ENCODE measurements at regions of chr22 and their contacts with region 1.

Region 1: GRCh38 chr22:27238935-27239510 is 562.5 kb downstream of the MN1 start:
- DNase-seq: peak; percentile 99
- H3K4me3 ChIP-seq: no peak overlapping the region
- H3K27ac ChIP-seq: peak overlapping the region; percentile 96
- H3K4me1 ChIP-seq: peaks cover 44% of the 10 kb centered on the region
- H3K27me3 ChIP-seq: no peaks in the 10 kb centered on the region
- CTCF ChIP-seq: no peak
- POLR2A ChIP-seq: peak; percentile 92

Region 2: GRCh38 chr22:26672590-26673468 is 566.2 kb before region 1 on chr22:
- CTCF ChIA-PET with region 1: no interaction called
- POLR2A ChIA-PET with region 1: no interaction called
- dilution Hi-C with region 1: no loop called
- intact Hi-C with region 1: loop called (anchors 5 kb)
- DNase-seq: peak; percentile 76
- H3K4me3 ChIP-seq: peak overlapping the region; percentile 52 to 76 (median 56)
- H3K27ac ChIP-seq: peak overlapping the region; percentile 93
- H3K4me1 ChIP-seq: peaks cover 21% of the 10 kb centered on the region
- H3K27me3 ChIP-seq: no peaks in the 10 kb centered on the region
- CTCF ChIP-seq: peak; percentile 23 to 29
- POLR2A ChIP-seq: peak; percentile 82

Region 3: GRCh38 chr22:26835929-26836528 is 403.0 kb before region 1 on chr22:
- CTCF ChIA-PET with region 1: no interaction called
- POLR2A ChIA-PET with region 1: no interaction called
- dilution Hi-C with region 1: no loop called
- intact Hi-C with region 1: loop called (anchors 10 kb)
- DNase-seq: peak; percentile 42
- H3K4me3 ChIP-seq: no peak overlapping the region
- H3K27ac ChIP-seq: no peak overlapping the region
- H3K4me1 ChIP-seq: no peaks in the 10 kb centered on the region
- H3K27me3 ChIP-seq: no peaks in the 10 kb centered on the region
- CTCF ChIP-seq: peak; percentile 51 to 71
- POLR2A ChIP-seq: no peak

Region 4: DNA sequence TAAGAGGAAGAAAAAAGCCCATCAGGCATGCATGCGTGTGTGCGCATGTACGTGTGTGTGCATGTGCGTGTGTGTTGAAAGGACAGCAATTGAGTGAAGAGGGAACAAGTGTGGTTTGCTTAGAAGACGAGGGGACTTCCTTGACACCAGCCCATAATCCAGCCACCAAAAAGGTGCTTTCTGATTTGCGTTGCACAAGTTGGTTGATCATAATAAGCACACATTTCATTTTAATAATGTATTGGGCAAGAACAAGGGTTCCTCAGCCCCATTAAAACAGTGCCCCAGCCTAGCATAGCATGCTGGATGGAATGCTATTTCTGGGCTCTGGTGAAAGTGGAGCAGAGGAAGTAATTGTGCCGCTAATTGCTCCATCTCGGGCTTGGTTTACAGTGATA is 88.5 kb before region 1 on chr22:
- CTCF ChIA-PET with region 1: interaction called, 3 read pairs
- POLR2A ChIA-PET with region 1: no interaction called
- dilution Hi-C with region 1: no loop called
- intact Hi-C with region 1: loop called (anchors 1 kb)
- DNase-seq: no peak
- H3K4me3 ChIP-seq: no peak overlapping the region
- H3K27ac ChIP-seq: no peak overlapping the region
- H3K4me1 ChIP-seq: peaks cover 35% of the 10 kb centered on the region
- H3K27me3 ChIP-seq: no peaks in the 10 kb centered on the region
- CTCF ChIP-seq: no peak
- POLR2A ChIP-seq: no peak

Region 5: DNA sequence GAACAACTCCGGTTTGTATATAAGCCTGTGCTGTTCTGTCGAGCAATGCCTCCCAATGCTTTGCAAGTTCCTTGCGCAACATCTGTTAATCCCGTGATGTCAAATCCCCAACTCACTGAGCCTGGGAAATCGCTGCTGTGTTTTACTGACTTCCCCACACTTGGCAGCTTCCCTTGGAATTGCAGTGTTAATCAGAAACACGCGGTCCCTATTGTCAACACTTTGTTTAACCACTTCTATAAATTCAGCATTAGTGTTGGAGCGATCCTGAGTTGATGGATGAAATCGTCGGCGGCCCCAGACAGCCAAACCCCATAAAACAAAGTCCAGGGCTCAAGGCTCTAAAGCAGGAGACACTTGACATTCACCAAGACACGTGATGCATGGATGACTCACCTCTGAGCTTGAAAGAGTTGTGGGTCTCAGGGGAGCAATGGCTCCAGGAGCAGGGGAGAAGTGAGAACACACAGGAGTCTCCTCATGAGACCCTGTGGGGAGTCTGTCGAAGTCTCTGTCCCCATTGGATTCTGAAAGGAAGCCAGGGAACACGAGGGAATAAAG is 26.3 kb before region 1 on chr22:
- CTCF ChIA-PET with region 1: interaction called, 5 read pairs
- POLR2A ChIA-PET with region 1: interaction called, 3 read pairs
- dilution Hi-C with region 1: no loop called
- intact Hi-C with region 1: loop called (anchors 1 kb)
- DNase-seq: peak; percentile 96
- H3K4me3 ChIP-seq: no peak overlapping the region
- H3K27ac ChIP-seq: peak overlapping the region; percentile 71
- H3K4me1 ChIP-seq: peaks cover 21% of the 10 kb centered on the region
- H3K27me3 ChIP-seq: no peaks in the 10 kb centered on the region
- CTCF ChIP-seq: no peak
- POLR2A ChIP-seq: no peak

Region 6: DNA sequence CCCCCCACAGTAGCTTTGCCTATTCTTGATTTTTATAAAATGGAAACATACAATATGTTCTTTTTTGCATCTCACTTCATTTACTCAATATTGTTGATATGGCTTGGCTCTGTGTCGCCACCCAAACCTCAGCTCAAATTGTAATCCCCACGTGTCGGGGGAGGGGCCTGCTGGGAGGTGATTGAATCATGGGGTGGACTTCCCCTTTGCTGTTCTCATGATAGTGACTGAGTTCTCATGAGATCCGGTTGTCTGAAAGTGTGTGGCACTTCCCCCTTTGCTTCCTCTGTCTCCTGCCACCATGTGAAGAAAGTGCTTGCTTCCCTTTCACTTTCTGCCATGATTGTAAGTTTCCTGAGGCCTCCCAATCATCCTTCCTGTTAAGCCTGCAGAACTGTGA is 131.2 kb after region 1 on chr22:
- CTCF ChIA-PET with region 1: no interaction called
- POLR2A ChIA-PET with region 1: no interaction called
- dilution Hi-C with region 1: no loop called
- intact Hi-C with region 1: no loop called
- DNase-seq: no peak
- H3K4me3 ChIP-seq: no peak overlapping the region
- H3K27ac ChIP-seq: no peak overlapping the region
- H3K4me1 ChIP-seq: no peaks in the 10 kb centered on the region
- H3K27me3 ChIP-seq: peaks cover 16 to 18% of the 10 kb centered on the region in 2 experiments
- CTCF ChIP-seq: no peak
- POLR2A ChIP-seq: no peak

Region 7: GRCh38 chr22:27512283-27512761 is 273.3 kb after region 1 on chr22:
- CTCF ChIA-PET with region 1: no interaction called
- POLR2A ChIA-PET with region 1: no interaction called
- dilution Hi-C with region 1: no loop called
- intact Hi-C with region 1: loop called (anchors 1 kb)
- DNase-seq: peak; percentile 99
- H3K4me3 ChIP-seq: no peak overlapping the region
- H3K27ac ChIP-seq: peak overlapping the region; percentile 83
- H3K4me1 ChIP-seq: peaks cover 29% of the 10 kb centered on the region
- H3K27me3 ChIP-seq: no peaks in the 10 kb centered on the region
- CTCF ChIP-seq: no peak
- POLR2A ChIP-seq: no peak